ENCODE measurements at regions of chr11 and their contacts with region 1.

Region 1: DNA sequence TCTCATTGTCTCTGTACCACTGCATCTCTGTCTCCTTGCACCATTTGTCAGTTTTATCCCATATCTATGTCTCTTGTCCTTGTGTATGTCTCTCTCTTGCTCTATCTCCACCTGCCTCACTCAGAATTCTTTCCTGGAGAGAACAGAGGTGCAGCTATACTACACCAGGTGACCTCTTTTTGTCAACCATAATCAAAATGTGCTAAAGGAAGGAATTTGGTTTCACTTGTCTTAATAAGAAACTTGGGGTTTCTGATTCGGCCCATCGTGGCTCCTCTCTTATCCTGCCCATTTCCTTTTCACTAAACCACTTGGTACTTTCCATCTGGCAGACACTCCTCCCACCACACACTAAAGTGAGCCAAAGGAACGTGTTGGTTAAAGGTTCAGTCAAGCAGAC is 2.0 kb upstream of the C11orf42 start:
- DNase-seq: peak in 1 of 2 donors; percentile 62
- ATAC-seq: peak; percentile 24 to 56 (median 54)
- H3K4me3 ChIP-seq: no peak overlapping the region
- H3K4me3 Mint-ChIP-seq: peak overlapping the region; percentile 82
- H3K27ac ChIP-seq: peak overlapping the region; percentile 15
- H3K27ac Mint-ChIP-seq: peak overlapping the region; percentile 89 to 90
- H3K4me1 ChIP-seq: peaks cover 53% of the 10 kb centered on the region
- H3K4me1 Mint-ChIP-seq: peaks cover 69 to 82% of the 10 kb centered on the region in 2 donors
- H3K27me3 ChIP-seq: no peaks in the 10 kb centered on the region
- H3K27me3 Mint-ChIP-seq: no peaks in the 10 kb centered on the region
- CTCF ChIP-seq: no peak

Region 2: DNA sequence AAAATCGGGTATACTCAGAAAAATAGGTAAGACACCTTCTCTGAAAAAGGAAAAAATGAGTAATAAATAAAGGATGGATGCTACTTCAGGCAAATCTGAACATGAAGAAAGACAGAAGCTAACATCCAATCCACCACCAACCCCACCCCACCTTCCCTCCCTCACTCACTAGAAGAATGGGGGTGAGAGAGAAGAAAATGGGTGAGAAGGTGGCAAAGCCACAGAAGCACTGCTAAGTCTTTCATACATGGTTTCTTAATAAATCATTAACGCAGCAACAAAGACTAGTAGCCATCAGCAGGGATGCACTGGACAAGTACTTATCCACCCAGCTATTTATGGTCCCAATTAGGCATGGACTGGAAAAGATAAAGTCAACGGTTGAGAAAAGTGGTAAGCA is 25.2 kb after region 1 on chr11:
- intact Hi-C with region 1: loop called (anchors 1 kb)
- DNase-seq: peak in 1 of 2 donors; percentile 46
- ATAC-seq: peak; percentile 83 to 90 (median 83)
- H3K4me3 ChIP-seq: no peak overlapping the region
- H3K4me3 Mint-ChIP-seq: peak overlapping the region; percentile 89
- H3K27ac ChIP-seq: peak overlapping the region; percentile 70
- H3K27ac Mint-ChIP-seq: peak overlapping the region; percentile 77 to 89
- H3K4me1 ChIP-seq: peaks cover 31% of the 10 kb centered on the region
- H3K4me1 Mint-ChIP-seq: peaks cover 80 to 87% of the 10 kb centered on the region in 2 donors
- H3K27me3 ChIP-seq: no peaks in the 10 kb centered on the region
- H3K27me3 Mint-ChIP-seq: no peaks in the 10 kb centered on the region
- CTCF ChIP-seq: no peak

Region 3: GRCh38 chr11:6234387-6235107 is 31.2 kb after region 1 on chr11 and contains the start of gene FHIP1B:
- intact Hi-C with region 1: loop called (anchors 1 kb)
- DNase-seq: peak; percentile 98 to 100
- ATAC-seq: peak; percentile 91 to 98 (median 91)
- H3K4me3 ChIP-seq: peak within 1 kb of the TSS; percentile 98
- H3K4me3 Mint-ChIP-seq: peak within 1 kb of the TSS; percentile 98
- H3K27ac ChIP-seq: peak within 1 kb of the TSS; percentile 91
- H3K27ac Mint-ChIP-seq: peak within 1 kb of the TSS; percentile 89 to 98
- H3K4me1 ChIP-seq: peaks cover 25% of the 10 kb centered on the region
- H3K4me1 Mint-ChIP-seq: peaks cover 51 to 57% of the 10 kb centered on the region in 2 donors
- H3K27me3 ChIP-seq: no peaks in the 10 kb centered on the region
- H3K27me3 Mint-ChIP-seq: no peaks in the 10 kb centered on the region
- CTCF ChIP-seq: no peak
- total RNA-seq, gene FHIP1B: 50.6 to 76.9 (median 58.4) TPM

Region 4: DNA sequence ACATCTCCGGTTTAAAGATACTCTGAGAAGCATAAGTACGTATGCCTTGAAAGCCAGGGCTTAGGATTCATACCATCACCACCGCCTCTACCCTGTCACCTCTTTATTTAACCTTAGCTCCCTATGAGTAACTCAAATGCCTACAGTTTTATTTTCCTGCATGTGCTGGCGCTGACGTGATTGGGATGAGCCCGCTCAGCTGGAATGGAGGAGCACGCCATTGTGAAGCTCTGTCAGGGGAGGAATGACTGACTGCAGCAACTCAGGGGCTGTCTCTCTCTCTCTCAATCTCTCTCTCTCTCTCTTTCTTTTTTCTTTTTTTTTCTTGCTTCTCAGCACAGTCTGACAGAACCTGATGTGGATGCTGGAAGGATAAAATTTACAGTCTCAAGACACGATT is 104.5 kb after region 1 on chr11:
- intact Hi-C with region 1: no loop called
- DNase-seq: no peak
- ATAC-seq: no peak
- H3K4me3 ChIP-seq: no peak overlapping the region
- H3K4me3 Mint-ChIP-seq: no peak overlapping the region
- H3K27ac ChIP-seq: no peak overlapping the region
- H3K27ac Mint-ChIP-seq: no peak overlapping the region
- H3K4me1 ChIP-seq: no peaks in the 10 kb centered on the region
- H3K4me1 Mint-ChIP-seq: no peaks in the 10 kb centered on the region
- H3K27me3 ChIP-seq: no peaks in the 10 kb centered on the region
- H3K27me3 Mint-ChIP-seq: peaks cover 9 to 41% of the 10 kb centered on the region in 2 donors
- CTCF ChIP-seq: no peak

Region 5: GRCh38 chr11:6481012-6481923 is 277.9 kb after region 1 on chr11 and contains the starts of genes ARFIP2 and TIMM10B:
- intact Hi-C with region 1: loop called (anchors 5 kb)
- DNase-seq: peak; percentile 95 to 99
- ATAC-seq: peak; percentile 92 to 98 (median 96)
- H3K4me3 ChIP-seq: peak within 1 kb of the TSS; percentile 74
- H3K4me3 Mint-ChIP-seq: peak within 1 kb of the TSS; percentile 91
- H3K27ac ChIP-seq: peak within 1 kb of the TSS; percentile 95
- H3K27ac Mint-ChIP-seq: peak within 1 kb of the TSS; percentile 95 to 99
- H3K4me1 ChIP-seq: peaks cover 22% of the 10 kb centered on the region
- H3K4me1 Mint-ChIP-seq: peaks cover 32 to 37% of the 10 kb centered on the region in 2 donors
- H3K27me3 ChIP-seq: no peaks in the 10 kb centered on the region
- H3K27me3 Mint-ChIP-seq: no peaks in the 10 kb centered on the region
- CTCF ChIP-seq: no peak
- total RNA-seq, gene ARFIP2: 44.7 to 62.3 (median 51.4) TPM
- total RNA-seq, gene TIMM10B: 69.6 to 92.8 (median 71.4) TPM

Measured in natural killer cell (primary cell).